Naive thymus-derived CD4-positive, alpha-beta T cell (primary cell): ENCODE measurements at regions of chr11 and their contacts with region 1.

Region 1: GRCh38 chr11:63671322-63672155 is at the start of gene ATL3:
- DNase-seq: peak; percentile 82 to 92 (median 91)
- ATAC-seq: peak; percentile 98
- H3K4me3 ChIP-seq: peak within 1 kb of the TSS; percentile 97
- H3K4me3 Mint-ChIP-seq: peak within 1 kb of the TSS; percentile 76 to 90 (median 88)
- H3K27ac ChIP-seq: peak within 1 kb of the TSS; percentile 74
- H3K27ac Mint-ChIP-seq: peak within 1 kb of the TSS; percentile 68 to 91 (median 86)
- H3K4me1 ChIP-seq: peaks cover 4 to 6% of the 10 kb centered on the region in 2 donors
- H3K4me1 Mint-ChIP-seq: peaks cover 22 to 48% (median 27%) of the 10 kb centered on the region in 7 donors
- H3K27me3 ChIP-seq: no peaks in the 10 kb centered on the region
- H3K27me3 Mint-ChIP-seq: no peaks in the 10 kb centered on the region
- total RNA-seq, gene ATL3: 25.3 to 33.3 (median 29.5) TPM

Region 2: GRCh38 chr11:63574856-63575602 is 96.5 kb before region 1 on chr11:
- CTCF ChIA-PET with region 1: no interaction called
- POLR2A ChIA-PET with region 1: no interaction called
- intact Hi-C with region 1: no loop called
- DNase-seq: no peak
- ATAC-seq: no peak
- H3K4me3 ChIP-seq: peak overlapping the region; percentile 43
- H3K4me3 Mint-ChIP-seq: peak overlapping the region; percentile 77 to 95 (median 88)
- H3K27ac ChIP-seq: peak overlapping the region; percentile 33
- H3K27ac Mint-ChIP-seq: peak overlapping the region; percentile 81 to 99 (median 93)
- H3K4me1 ChIP-seq: peaks cover 12 to 13% of the 10 kb centered on the region in 2 donors
- H3K4me1 Mint-ChIP-seq: peaks cover 18 to 40% (median 30%) of the 10 kb centered on the region in 7 donors
- H3K27me3 ChIP-seq: no peaks in the 10 kb centered on the region
- H3K27me3 Mint-ChIP-seq: peaks cover 0 to 18% (median 0%) of the 10 kb centered on the region in 5 donors

Region 3: GRCh38 chr11:63614136-63614664 is 57.3 kb before region 1 on chr11 and contains the start of gene PLAAT3:
- CTCF ChIA-PET with region 1: no interaction called
- POLR2A ChIA-PET with region 1: no interaction called
- intact Hi-C with region 1: loop called in 1 of 2 experiments (anchors 1 kb)
- DNase-seq: peak in 7 of 9 donors; percentile 11 to 41 (median 16)
- ATAC-seq: peak; percentile 70
- H3K4me3 ChIP-seq: peak within 1 kb of the TSS; percentile 75
- H3K4me3 Mint-ChIP-seq: peak within 1 kb of the TSS; percentile 82 to 89 (median 86)
- H3K27ac ChIP-seq: peak within 1 kb of the TSS; percentile 35
- H3K27ac Mint-ChIP-seq: peak within 1 kb of the TSS in 8 of 9 donors; percentile 52 to 74 (median 62)
- H3K4me1 ChIP-seq: peaks cover 0 to 3% of the 10 kb centered on the region in 2 donors
- H3K4me1 Mint-ChIP-seq: peaks cover 0 to 26% (median 12%) of the 10 kb centered on the region in 7 donors
- H3K27me3 ChIP-seq: no peaks in the 10 kb centered on the region
- H3K27me3 Mint-ChIP-seq: peaks cover 0 to 31% (median 0%) of the 10 kb centered on the region in 5 donors
- total RNA-seq, gene PLAAT3: 0.92 to 10.3 (median 2.0) TPM

Region 4: DNA sequence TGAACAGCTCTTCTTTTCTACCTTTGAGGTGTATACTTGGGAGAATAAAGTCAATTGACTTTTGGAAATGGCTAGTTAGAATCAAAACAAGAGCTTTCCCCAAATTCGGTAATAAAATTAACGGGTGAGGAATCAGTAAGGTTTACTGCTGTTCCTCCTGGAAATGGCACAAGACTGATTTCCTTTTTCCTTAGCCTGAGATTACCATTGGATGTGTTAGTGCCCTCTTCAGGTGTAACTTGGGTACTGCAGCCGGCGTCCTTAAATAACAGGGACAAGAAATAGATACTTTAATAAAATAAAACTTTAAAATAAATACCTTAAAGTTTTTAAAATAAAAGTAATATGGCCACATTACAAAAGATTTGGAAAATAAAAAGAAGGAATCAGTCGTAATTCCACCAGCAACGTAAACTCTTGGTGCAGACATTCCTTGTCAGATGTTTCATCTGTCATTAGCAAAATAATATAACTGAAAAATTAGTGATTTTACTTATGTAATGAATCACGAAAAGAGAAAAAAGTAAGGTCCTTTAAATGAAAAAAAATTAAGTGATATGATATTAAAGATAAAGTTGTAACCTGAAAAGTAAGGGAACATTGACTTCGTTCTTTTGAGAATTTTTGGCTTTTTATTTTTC is 67.3 kb after region 1 on chr11:
- CTCF ChIA-PET with region 1: interaction called, 25 read pairs
- POLR2A ChIA-PET with region 1: no interaction called
- intact Hi-C with region 1: loop called (anchors 1 to 2 kb)
- DNase-seq: peak in 8 of 9 donors; percentile 23 to 64 (median 46)
- ATAC-seq: peak; percentile 70
- H3K4me3 ChIP-seq: no peak overlapping the region
- H3K4me3 Mint-ChIP-seq: no peak overlapping the region
- H3K27ac ChIP-seq: no peak overlapping the region
- H3K27ac Mint-ChIP-seq: peak overlapping the region in 3 of 9 donors; percentile 29 to 67 (median 45)
- H3K4me1 ChIP-seq: no peaks in the 10 kb centered on the region
- H3K4me1 Mint-ChIP-seq: peaks cover 3 to 8% (median 4%) of the 10 kb centered on the region in 7 donors
- H3K27me3 ChIP-seq: no peaks in the 10 kb centered on the region
- H3K27me3 Mint-ChIP-seq: no peaks in the 10 kb centered on the region

Region 5: DNA sequence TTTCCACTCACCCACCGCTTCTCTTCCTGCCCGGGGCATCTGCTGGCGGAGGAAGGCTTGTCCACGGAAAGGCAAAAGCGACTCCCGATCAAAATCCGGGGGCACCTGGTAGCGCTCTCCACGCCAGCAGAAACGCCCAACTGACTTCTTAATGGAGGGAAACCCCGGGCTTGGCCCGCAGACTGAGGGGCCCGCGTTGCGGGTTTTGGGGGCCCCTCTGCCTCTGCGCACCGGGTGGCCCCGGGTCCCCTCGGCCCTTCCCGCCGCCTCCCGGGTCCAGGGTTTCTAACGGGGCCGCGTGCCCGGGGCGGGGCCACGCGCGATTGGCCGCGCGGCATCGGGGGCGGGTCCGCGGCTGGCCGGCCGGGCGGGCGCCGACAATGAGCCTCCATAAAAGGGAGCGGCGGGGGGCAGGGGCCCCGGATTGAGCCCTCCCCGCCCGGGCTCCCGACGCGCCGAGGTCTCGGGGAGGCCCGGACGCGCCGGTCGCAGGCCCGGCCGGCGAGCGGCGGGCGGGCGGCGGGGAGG is 141.6 kb after region 1 on chr11 and contains the start of gene SPINDOC:
- CTCF ChIA-PET with region 1: no interaction called
- POLR2A ChIA-PET with region 1: no interaction called
- intact Hi-C with region 1: loop called in 1 of 2 experiments (anchors 5 kb)
- DNase-seq: peak; percentile 17 to 90 (median 36)
- ATAC-seq: peak; percentile 94
- H3K4me3 ChIP-seq: peak within 1 kb of the TSS; percentile 65
- H3K4me3 Mint-ChIP-seq: peak within 1 kb of the TSS; percentile 71 to 86 (median 80)
- H3K27ac ChIP-seq: peak within 1 kb of the TSS; percentile 69
- H3K27ac Mint-ChIP-seq: peak within 1 kb of the TSS in 7 of 9 donors; percentile 5 to 63 (median 29)
- H3K4me1 ChIP-seq: peaks cover 4 to 6% of the 10 kb centered on the region in 2 donors
- H3K4me1 Mint-ChIP-seq: peaks cover 6 to 32% (median 21%) of the 10 kb centered on the region in 7 donors
- H3K27me3 ChIP-seq: no peaks in the 10 kb centered on the region
- H3K27me3 Mint-ChIP-seq: no peaks in the 10 kb centered on the region
- total RNA-seq, gene SPINDOC: 6.6 to 42.2 (median 9.3) TPM

Region 6: GRCh38 chr11:64094463-64095260 is 423.1 kb after region 1 on chr11:
- CTCF ChIA-PET with region 1: no interaction called
- POLR2A ChIA-PET with region 1: no interaction called
- intact Hi-C with region 1: no loop called
- DNase-seq: no peak
- ATAC-seq: peak; percentile 75
- H3K4me3 ChIP-seq: no peak overlapping the region
- H3K4me3 Mint-ChIP-seq: no peak overlapping the region
- H3K27ac ChIP-seq: no peak overlapping the region
- H3K27ac Mint-ChIP-seq: no peak overlapping the region
- H3K4me1 ChIP-seq: no peaks in the 10 kb centered on the region
- H3K4me1 Mint-ChIP-seq: peaks cover 0 to 7% (median 0%) of the 10 kb centered on the region in 7 donors
- H3K27me3 ChIP-seq: no peaks in the 10 kb centered on the region
- H3K27me3 Mint-ChIP-seq: no peaks in the 10 kb centered on the region

Region 7: GRCh38 chr11:64165849-64166635 is 494.5 kb after region 1 on chr11 and contains the start of gene MACROD1:
- CTCF ChIA-PET with region 1: no interaction called
- POLR2A ChIA-PET with region 1: no interaction called
- intact Hi-C with region 1: loop called in 1 of 2 experiments (anchors 2 kb)
- DNase-seq: peak; percentile 52 to 87 (median 65)
- ATAC-seq: peak; percentile 95
- H3K4me3 ChIP-seq: peak within 1 kb of the TSS; percentile 74
- H3K4me3 Mint-ChIP-seq: peak within 1 kb of the TSS; percentile 85 to 94 (median 90)
- H3K27ac ChIP-seq: peak within 1 kb of the TSS; percentile 66
- H3K27ac Mint-ChIP-seq: peak within 1 kb of the TSS; percentile 51 to 83 (median 78)
- H3K4me1 ChIP-seq: peaks cover 0 to 5% of the 10 kb centered on the region in 2 donors
- H3K4me1 Mint-ChIP-seq: peaks cover 7 to 22% (median 16%) of the 10 kb centered on the region in 7 donors
- H3K27me3 ChIP-seq: no peaks in the 10 kb centered on the region
- H3K27me3 Mint-ChIP-seq: no peaks in the 10 kb centered on the region
- total RNA-seq, gene MACROD1: 5.4 to 12.4 (median 8.7) TPM

Region 8: DNA sequence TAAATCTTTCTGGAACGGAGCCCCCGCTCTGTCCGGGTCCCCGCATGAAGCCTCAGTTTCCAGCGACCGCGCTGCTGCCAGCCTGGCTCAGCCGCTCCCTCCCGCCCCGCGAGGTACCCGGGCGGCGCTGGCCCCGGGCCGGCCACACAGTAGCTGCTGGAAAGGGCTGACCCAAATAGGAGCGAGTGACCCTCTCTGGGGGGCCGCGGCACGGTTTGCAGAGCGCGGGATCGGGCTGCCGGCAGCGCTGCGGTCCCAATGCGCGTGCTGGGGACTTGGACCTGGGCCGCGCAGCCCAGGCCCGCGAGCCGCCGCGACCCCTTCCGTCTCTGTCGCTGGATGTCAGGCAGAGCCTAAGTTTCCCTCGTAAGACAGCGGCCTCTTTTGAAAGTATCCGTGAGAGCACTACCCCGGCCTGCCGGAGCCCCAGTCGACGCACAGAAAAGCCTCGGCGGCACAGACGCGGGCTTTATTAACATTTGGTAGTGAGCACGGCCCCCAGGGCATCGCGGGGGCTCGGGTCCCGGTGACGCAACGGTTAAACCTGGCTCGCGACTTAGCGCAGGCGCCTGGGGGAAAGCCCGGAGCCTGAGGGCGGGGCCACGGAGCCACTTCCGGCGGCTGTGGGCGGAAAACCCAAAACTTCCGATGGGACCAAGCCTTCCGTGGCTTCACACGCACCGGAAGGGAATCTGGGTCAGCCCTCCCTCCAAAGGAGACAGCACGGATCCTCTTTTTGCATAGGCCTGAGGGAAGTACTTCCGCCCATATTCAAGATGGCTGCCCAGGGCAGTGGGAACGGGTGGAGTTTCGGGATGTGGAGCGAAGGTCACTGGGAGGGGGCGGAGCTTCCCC is 598.1 kb after region 1 on chr11:
- CTCF ChIA-PET with region 1: no interaction called
- POLR2A ChIA-PET with region 1: no interaction called
- intact Hi-C with region 1: loop called in 1 of 2 experiments (anchors 2 kb)
- DNase-seq: peak; percentile 89 to 98 (median 98)
- ATAC-seq: peak; percentile 82
- H3K4me3 ChIP-seq: peak overlapping the region; percentile 91
- H3K4me3 Mint-ChIP-seq: peak overlapping the region; percentile 95 to 100 (median 98)
- H3K27ac ChIP-seq: peak overlapping the region; percentile 95
- H3K27ac Mint-ChIP-seq: peak overlapping the region; percentile 94 to 99 (median 99)
- H3K4me1 ChIP-seq: peaks cover 8 to 10% of the 10 kb centered on the region in 2 donors
- H3K4me1 Mint-ChIP-seq: peaks cover 8 to 29% (median 24%) of the 10 kb centered on the region in 7 donors
- H3K27me3 ChIP-seq: no peaks in the 10 kb centered on the region
- H3K27me3 Mint-ChIP-seq: no peaks in the 10 kb centered on the region